ENCODE measurements at regions of chr1 and their contacts with region 1.

Region 1: GRCh38 chr1:156282479-156283222 is at the start of gene SMG5:
- DNase-seq: peak; percentile 97
- H3K4me3 Mint-ChIP-seq: peak within 1 kb of the TSS; percentile 86
- H3K27ac Mint-ChIP-seq: peak within 1 kb of the TSS; percentile 81
- H3K4me1 Mint-ChIP-seq: peaks cover 39% of the 10 kb centered on the region
- H3K27me3 Mint-ChIP-seq: no peaks in the 10 kb centered on the region
- total RNA-seq, gene SMG5: 58.5 to 60.4 TPM

Region 2: GRCh38 chr1:156129706-156130581 is 152.7 kb before region 1 on chr1:
- CTCF ChIA-PET with region 1: interaction called, 7 read pairs
- POLR2A ChIA-PET with region 1: interaction called, 10 read pairs
- DNase-seq: peak; percentile 83
- H3K4me3 Mint-ChIP-seq: no peak overlapping the region
- H3K27ac Mint-ChIP-seq: no peak overlapping the region
- H3K4me1 Mint-ChIP-seq: peaks cover 53% of the 10 kb centered on the region
- H3K27me3 Mint-ChIP-seq: no peaks in the 10 kb centered on the region

Region 3: DNA sequence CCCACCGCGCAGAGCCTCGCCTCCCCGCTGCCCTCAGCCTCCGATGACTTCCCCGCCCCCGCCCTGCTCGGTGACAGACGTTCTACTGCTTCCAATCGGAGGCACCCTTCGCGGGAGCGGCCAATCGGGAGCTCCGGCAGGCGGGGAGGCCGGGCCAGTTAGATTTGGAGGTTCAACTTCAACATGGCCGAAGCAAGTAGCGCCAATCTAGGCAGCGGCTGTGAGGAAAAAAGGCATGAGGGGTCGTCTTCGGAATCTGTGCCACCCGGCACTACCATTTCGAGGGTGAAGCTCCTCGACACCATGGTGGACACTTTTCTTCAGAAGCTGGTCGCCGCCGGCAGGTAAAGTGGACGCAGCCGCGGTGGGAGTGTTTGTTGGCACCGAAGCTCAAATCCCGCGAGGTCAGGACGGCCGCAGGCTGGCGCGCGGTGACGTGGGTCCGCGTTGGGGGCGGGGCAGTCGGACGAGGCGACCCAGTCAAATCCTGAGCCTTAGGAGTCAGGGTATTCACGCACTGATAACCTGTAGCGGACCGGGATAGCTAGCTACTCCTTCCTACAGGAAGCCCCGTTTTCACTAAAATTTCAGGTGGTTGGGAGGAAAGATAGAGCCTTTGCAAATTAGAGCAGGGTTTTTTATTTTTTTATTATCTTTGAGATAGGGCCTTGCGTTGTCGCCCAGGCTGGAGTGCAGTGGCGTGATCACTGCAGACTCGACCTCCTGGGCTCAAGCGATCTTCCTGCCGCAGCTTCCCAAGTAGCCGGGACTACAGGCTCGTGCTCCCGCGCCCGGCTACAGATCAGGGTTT is 69.6 kb before region 1 on chr1 and contains the start of gene PMF1:
- CTCF ChIA-PET with region 1: interaction called, 3 read pairs
- POLR2A ChIA-PET with region 1: interaction called, 35 read pairs
- DNase-seq: peak; percentile 97
- H3K4me3 Mint-ChIP-seq: peak within 1 kb of the TSS; percentile 87
- H3K27ac Mint-ChIP-seq: peak within 1 kb of the TSS; percentile 94
- H3K4me1 Mint-ChIP-seq: peaks cover 46% of the 10 kb centered on the region
- H3K27me3 Mint-ChIP-seq: no peaks in the 10 kb centered on the region
- total RNA-seq, gene PMF1: 65.5 to 67.7 TPM

Region 4: GRCh38 chr1:156245451-156246232 is 37.0 kb before region 1 on chr1:
- CTCF ChIA-PET with region 1: no interaction called
- POLR2A ChIA-PET with region 1: interaction called, 13 read pairs
- DNase-seq: peak; percentile 57
- H3K4me3 Mint-ChIP-seq: peak overlapping the region; percentile 73
- H3K27ac Mint-ChIP-seq: peak overlapping the region; percentile 40
- H3K4me1 Mint-ChIP-seq: peaks cover 27% of the 10 kb centered on the region
- H3K27me3 Mint-ChIP-seq: no peaks in the 10 kb centered on the region

Region 5: DNA sequence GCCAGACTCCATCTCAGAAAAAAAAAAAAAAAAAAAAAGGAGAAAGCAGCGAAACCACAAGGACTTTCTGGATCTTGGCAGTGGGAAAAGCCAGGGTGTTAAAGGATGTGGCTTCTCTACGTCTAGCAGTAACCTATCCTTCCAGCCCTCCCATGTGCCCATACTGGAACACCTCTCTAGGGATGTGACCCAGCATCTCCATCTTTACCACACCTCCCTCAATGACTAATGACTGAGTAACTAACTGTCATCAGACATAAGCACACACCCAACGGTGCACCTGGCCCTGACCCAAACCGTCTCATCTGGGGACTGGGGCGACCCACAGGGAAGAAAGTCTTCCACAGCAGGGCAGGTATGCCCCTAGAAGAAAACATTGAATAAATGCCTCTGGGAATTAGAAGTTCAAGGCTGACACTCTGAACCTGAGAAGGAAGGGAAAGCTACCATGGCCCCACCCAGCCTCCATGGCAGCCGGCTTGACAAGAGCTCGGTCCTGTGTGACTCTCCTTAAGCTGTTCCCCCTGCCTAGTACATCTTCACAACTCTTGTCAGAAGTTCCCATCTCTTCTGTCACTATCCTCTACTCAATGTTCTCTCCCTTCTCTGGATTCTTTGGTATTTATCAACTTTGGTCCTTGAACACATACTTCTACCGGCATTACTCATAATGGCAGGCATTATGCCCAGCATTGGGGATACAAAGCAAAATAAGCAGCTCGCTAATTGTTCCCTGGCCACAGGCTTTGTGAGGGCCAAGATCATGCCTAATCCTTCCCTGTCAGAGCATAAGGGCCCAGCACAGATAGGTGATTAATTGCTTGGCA is 20.0 kb before region 1 on chr1:
- CTCF ChIA-PET with region 1: interaction called, 3 read pairs
- POLR2A ChIA-PET with region 1: interaction called, 17 read pairs
- DNase-seq: no peak
- H3K4me3 Mint-ChIP-seq: no peak overlapping the region
- H3K27ac Mint-ChIP-seq: peak overlapping the region; percentile 5
- H3K4me1 Mint-ChIP-seq: peaks cover 12% of the 10 kb centered on the region
- H3K27me3 Mint-ChIP-seq: no peaks in the 10 kb centered on the region

Region 6: GRCh38 chr1:156308078-156308477 is 25.4 kb after region 1 on chr1:
- CTCF ChIA-PET with region 1: interaction called, 3 read pairs
- POLR2A ChIA-PET with region 1: interaction called, 14 read pairs
- DNase-seq: no peak
- H3K4me3 Mint-ChIP-seq: no peak overlapping the region
- H3K27ac Mint-ChIP-seq: no peak overlapping the region
- H3K4me1 Mint-ChIP-seq: no peaks in the 10 kb centered on the region
- H3K27me3 Mint-ChIP-seq: no peaks in the 10 kb centered on the region

Region 7: DNA sequence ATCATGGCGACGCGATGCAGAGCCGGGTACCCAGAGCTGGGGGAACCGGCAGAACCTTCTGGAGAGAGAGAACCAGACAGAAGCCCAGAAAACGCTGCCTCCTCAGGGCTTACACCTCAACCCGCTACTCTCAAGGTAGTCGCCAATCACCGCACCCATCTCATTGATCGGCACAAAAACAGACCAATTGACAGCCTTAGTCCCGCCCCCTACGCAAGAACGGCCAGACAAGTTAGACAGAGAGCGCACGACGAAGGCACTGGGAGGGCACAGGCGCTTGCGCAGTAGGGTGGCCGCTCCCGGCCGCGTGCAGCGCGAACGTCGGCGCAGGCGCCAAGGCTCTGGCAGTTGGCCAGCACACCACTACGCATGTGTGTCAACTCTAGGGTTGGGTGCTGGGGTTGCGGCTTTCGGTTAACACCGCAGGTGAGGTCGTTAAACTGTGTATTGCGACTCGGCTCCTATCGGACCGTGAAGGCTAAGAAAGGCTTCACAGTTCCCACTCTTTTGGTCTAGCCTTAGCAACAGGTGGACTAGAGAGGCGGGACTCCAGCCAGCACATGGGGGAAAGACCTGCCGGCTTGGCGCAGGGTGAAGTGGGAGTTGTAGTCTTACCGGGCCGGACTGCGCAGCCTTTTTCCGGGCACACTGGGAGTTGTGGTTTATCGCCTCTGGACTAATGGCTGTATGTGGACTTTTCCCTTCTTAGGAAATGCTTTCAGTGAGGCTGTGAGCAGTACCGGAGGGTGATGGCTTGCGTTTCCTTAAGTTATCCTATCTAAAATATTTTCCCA is 55.7 kb after region 1 on chr1 and contains the starts of genes CCT3 and TSACC:
- CTCF ChIA-PET with region 1: interaction called, 4 read pairs
- POLR2A ChIA-PET with region 1: interaction called, 15 read pairs
- DNase-seq: peak; percentile 99
- H3K4me3 Mint-ChIP-seq: peak within 1 kb of the TSS; percentile 98
- H3K27ac Mint-ChIP-seq: peak within 1 kb of the TSS; percentile 95
- H3K4me1 Mint-ChIP-seq: peaks cover 39% of the 10 kb centered on the region
- H3K27me3 Mint-ChIP-seq: peaks cover 2% of the 10 kb centered on the region
- total RNA-seq, gene CCT3: 181 to 184 TPM
- total RNA-seq, gene TSACC: 0.65 TPM in 1 of 2 experiments, not detected in the other

Region 8: GRCh38 chr1:156533568-156534215 is 251.0 kb after region 1 on chr1:
- CTCF ChIA-PET with region 1: no interaction called
- POLR2A ChIA-PET with region 1: no interaction called
- DNase-seq: no peak
- H3K4me3 Mint-ChIP-seq: no peak overlapping the region
- H3K27ac Mint-ChIP-seq: no peak overlapping the region
- H3K4me1 Mint-ChIP-seq: peaks cover 4% of the 10 kb centered on the region
- H3K27me3 Mint-ChIP-seq: no peaks in the 10 kb centered on the region